ENCODE measurements at regions of chr15 and their contacts with region 1.

Region 1: DNA sequence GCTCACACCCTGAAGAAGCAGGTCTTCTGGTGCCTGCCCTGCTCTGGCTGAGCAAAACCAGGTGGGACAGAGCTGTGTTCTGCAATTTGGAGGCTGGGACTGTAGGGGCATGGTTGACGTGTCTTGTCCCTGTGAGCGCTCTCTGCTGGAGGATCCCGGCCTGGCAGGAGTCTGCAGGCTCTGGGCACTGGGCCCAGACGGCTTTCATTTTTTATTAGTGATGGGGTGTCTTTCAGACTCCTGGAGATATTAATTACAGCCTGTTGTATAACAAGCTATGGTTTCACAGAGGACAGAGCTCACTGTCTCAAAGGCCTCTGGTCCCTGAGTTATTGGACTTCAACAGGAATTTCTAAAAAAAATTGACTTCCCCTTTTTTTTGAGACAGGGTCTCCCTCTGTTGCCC is 29.5 kb upstream of the ZNF710 start:
- DNase-seq: peak; percentile 88
- ATAC-seq: peak; percentile 100
- H3K4me3 Mint-ChIP-seq: no peak overlapping the region
- H3K27ac Mint-ChIP-seq: no peak overlapping the region
- H3K4me1 Mint-ChIP-seq: no peaks in the 10 kb centered on the region
- H3K27me3 Mint-ChIP-seq: peaks cover 12% of the 10 kb centered on the region
- CTCF ChIP-seq: peak; percentile 61; the same call in 1 of the 2 replicates

Region 2: GRCh38 chr15:89893696-89894455 is 77.7 kb before region 1 on chr15 and contains the start of gene AP3S2:
- CTCF ChIA-PET with region 1: interaction called, 47 read pairs
- POLR2A ChIA-PET with region 1: no interaction called
- DNase-seq: peak; percentile 87
- ATAC-seq: peak; percentile 77
- H3K4me3 Mint-ChIP-seq: peak within 1 kb of the TSS; percentile 99
- H3K27ac Mint-ChIP-seq: peak within 1 kb of the TSS; percentile 99
- H3K4me1 Mint-ChIP-seq: peaks cover 19% of the 10 kb centered on the region
- H3K27me3 Mint-ChIP-seq: no peaks in the 10 kb centered on the region
- CTCF ChIP-seq: no peak
- total RNA-seq, gene AP3S2: 35.7 to 40.0 TPM (median 36.7 TPM) in 3 replicates

Region 3: DNA sequence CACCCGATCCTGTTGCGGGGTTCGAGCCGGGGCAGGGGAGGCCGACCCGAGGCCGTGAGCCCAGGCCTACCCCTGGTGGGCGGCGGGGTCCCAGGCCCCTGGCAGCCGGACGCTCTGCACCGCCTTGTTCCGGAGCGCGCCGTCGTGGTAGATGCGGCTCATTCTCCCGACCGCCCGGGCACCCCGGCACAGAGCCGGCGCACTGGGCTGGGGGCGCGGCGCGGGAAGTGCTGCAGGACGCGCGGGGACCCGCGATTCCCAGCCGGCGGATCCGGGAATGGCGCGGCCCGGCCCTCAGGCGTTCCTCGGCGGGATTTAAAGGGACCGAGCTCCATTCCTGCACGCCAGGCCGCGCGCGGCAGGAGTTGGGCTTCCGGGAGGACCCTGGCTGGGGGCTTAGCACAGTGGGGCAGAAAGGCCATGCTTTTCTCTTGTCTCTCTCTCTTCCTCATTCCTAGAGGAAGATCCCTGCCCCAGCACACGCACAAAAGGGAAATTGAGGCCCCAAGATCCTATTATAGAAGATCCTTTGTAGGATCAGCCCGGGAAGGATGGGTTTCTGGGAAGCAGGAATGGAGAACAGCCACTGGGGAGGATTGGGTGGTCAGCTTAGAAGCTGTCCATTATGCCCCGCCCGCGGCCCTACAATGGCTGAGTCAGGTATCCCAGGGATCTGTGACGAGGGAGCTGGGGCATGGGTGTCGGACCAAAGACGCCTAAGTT is 58.8 kb before region 1 on chr15 and contains the start of gene ARPIN:
- CTCF ChIA-PET with region 1: interaction called, 17 read pairs
- POLR2A ChIA-PET with region 1: interaction called, 7 read pairs
- DNase-seq: peak; percentile 72
- ATAC-seq: peak; percentile 80
- H3K4me3 Mint-ChIP-seq: peak within 1 kb of the TSS; percentile 72
- H3K27ac Mint-ChIP-seq: no peak within 1 kb of the TSS
- H3K4me1 Mint-ChIP-seq: peaks cover 12% of the 10 kb centered on the region
- H3K27me3 Mint-ChIP-seq: peaks cover 21% of the 10 kb centered on the region
- CTCF ChIP-seq: no peak
- total RNA-seq, gene ARPIN: 3.5 to 4.8 TPM (median 4.7 TPM) in 3 replicates

Region 4: DNA sequence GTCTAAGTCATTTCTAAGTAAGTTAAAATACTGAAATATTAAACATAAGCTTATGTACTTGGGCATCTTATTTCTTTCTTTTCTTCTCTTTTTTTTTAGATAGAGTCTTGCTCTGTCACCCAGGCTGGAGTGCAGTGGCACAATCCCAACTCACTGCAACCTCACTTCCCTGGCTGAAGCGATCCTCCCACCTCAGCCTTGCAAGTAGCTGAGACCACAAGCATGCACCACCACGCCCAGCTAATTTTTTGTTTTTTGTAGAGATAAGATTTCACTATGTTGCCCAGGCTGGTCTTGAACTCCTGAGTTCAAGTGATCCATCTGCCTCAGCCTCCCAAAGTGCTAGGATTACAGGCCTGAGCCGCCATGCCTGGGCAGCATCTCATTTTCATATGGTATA is 13.5 kb after region 1 on chr15:
- CTCF ChIA-PET with region 1: interaction called, 15 read pairs
- POLR2A ChIA-PET with region 1: no interaction called
- DNase-seq: no peak
- ATAC-seq: no peak
- H3K4me3 Mint-ChIP-seq: no peak overlapping the region
- H3K27ac Mint-ChIP-seq: no peak overlapping the region
- H3K4me1 Mint-ChIP-seq: peaks cover 28% of the 10 kb centered on the region
- H3K27me3 Mint-ChIP-seq: peaks cover 66% of the 10 kb centered on the region
- CTCF ChIP-seq: no peak

Region 5: DNA sequence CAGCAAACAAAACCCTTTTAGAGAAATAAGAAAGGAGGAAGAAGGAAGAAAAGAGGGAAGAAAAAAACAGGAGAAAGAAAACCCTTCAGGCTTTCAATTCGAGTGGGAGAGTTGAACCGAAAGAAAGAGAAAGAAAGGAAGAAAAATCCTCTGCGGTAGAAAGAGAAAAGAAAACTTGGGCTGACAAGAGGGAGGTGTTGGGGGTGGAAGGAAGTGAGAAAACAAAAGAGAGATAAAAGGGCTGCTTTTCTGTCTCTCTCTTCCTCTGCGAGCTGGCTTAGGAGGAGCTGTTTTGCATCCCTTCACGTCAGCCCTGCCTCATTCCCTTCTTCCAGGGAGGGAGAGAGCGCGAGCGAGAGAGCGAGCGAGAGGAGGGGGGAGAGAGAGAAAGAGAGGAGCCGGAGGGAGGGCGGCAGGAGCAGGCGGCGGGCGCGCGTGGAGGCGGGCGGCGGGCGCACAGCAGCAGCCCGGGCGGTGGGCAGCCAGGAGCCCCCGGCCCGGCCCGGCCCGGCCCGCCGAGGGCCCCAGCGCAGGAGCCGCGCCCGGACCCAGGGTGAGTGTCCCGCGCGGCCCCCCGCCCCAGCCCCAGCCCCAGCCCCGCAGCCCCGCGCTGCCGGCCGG is 29.6 kb after region 1 on chr15 and contains the start of gene ZNF710:
- CTCF ChIA-PET with region 1: interaction called, 16 read pairs
- POLR2A ChIA-PET with region 1: no interaction called
- DNase-seq: peak; percentile 61
- ATAC-seq: peak; percentile 36
- H3K4me3 Mint-ChIP-seq: peak within 1 kb of the TSS; percentile 86
- H3K27ac Mint-ChIP-seq: peak within 1 kb of the TSS; percentile 95
- H3K4me1 Mint-ChIP-seq: peaks cover 55% of the 10 kb centered on the region
- H3K27me3 Mint-ChIP-seq: peaks cover 15% of the 10 kb centered on the region
- CTCF ChIP-seq: no peak
- total RNA-seq, gene ZNF710: 22.3 to 25.9 TPM (median 24.0 TPM) in 3 replicates

Region 6: GRCh38 chr15:90054618-90055097 is 83.1 kb after region 1 on chr15:
- CTCF ChIA-PET with region 1: no interaction called
- POLR2A ChIA-PET with region 1: no interaction called
- DNase-seq: no peak
- ATAC-seq: no peak
- H3K4me3 Mint-ChIP-seq: no peak overlapping the region
- H3K27ac Mint-ChIP-seq: no peak overlapping the region
- H3K4me1 Mint-ChIP-seq: peaks cover 52% of the 10 kb centered on the region
- H3K27me3 Mint-ChIP-seq: no peaks in the 10 kb centered on the region
- CTCF ChIP-seq: no peak

Region 7: DNA sequence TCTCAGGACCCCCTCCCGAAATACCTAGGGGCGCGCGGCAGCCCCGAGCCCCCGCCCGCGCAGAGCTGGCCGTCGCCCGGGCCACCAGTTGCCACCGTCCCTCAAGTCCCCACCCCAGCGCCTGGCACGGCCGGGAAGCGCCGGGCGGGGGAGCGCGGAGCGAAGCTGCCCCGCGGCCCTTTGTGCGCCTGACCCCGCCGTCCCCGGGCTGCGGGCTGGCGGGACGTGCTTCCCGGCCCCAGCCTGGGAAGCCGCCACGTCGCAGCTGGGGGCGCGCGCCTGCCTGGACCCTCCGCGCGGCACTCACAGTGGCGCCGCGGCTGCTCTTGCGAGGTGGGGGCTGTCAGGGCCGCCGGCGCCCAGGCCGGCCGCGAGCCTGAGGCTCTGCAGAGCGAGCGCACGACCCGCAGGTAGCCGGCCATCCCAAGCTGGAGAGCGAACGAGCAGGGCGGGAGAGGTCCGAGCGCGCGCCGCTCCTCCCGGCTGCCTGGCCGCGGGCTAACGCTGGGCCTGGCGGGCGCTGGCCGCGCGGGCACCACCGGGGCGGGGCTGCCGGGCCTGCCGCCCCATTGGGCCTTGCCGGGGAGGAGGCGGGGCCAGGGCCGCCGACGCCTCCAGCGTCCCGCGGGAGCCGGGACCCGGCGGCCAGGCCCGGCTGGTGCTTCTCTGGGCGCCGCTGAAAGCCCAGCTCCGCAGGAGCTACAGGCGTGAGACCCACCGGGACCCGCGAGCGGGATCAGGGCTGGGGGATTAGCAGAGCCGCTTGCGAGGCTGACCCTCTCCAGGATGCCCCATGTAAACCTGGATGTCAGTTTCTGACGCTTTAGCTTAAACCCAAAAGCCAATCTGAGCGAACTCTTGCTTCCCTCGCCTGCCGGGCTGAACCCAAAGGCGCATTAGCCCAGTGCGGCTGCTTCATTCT is 130.6 kb after region 1 on chr15 and contains the start of gene IDH2:
- CTCF ChIA-PET with region 1: interaction called, 11 read pairs
- POLR2A ChIA-PET with region 1: no interaction called
- DNase-seq: peak; percentile 82
- ATAC-seq: peak; percentile 91
- H3K4me3 Mint-ChIP-seq: peak within 1 kb of the TSS; percentile 79
- H3K27ac Mint-ChIP-seq: no peak within 1 kb of the TSS
- H3K4me1 Mint-ChIP-seq: peaks cover 42% of the 10 kb centered on the region
- H3K27me3 Mint-ChIP-seq: peaks cover 41% of the 10 kb centered on the region
- CTCF ChIP-seq: no peak
- total RNA-seq, gene IDH2: 53.3 to 80.3 TPM (median 72.3 TPM) in 3 replicates

Region 8: GRCh38 chr15:90211431-90212143 is 240.0 kb after region 1 on chr15:
- CTCF ChIA-PET with region 1: no interaction called
- POLR2A ChIA-PET with region 1: no interaction called
- DNase-seq: no peak
- ATAC-seq: peak; percentile 28
- H3K4me3 Mint-ChIP-seq: no peak overlapping the region
- H3K27ac Mint-ChIP-seq: peak overlapping the region; percentile 60
- H3K4me1 Mint-ChIP-seq: peaks cover 9% of the 10 kb centered on the region
- H3K27me3 Mint-ChIP-seq: no peaks in the 10 kb centered on the region
- CTCF ChIP-seq: no peak